Ascending aorta (tissue), 2 donors: ENCODE measurements at regions of chr5 and their contacts with region 1.

Region 1: DNA sequence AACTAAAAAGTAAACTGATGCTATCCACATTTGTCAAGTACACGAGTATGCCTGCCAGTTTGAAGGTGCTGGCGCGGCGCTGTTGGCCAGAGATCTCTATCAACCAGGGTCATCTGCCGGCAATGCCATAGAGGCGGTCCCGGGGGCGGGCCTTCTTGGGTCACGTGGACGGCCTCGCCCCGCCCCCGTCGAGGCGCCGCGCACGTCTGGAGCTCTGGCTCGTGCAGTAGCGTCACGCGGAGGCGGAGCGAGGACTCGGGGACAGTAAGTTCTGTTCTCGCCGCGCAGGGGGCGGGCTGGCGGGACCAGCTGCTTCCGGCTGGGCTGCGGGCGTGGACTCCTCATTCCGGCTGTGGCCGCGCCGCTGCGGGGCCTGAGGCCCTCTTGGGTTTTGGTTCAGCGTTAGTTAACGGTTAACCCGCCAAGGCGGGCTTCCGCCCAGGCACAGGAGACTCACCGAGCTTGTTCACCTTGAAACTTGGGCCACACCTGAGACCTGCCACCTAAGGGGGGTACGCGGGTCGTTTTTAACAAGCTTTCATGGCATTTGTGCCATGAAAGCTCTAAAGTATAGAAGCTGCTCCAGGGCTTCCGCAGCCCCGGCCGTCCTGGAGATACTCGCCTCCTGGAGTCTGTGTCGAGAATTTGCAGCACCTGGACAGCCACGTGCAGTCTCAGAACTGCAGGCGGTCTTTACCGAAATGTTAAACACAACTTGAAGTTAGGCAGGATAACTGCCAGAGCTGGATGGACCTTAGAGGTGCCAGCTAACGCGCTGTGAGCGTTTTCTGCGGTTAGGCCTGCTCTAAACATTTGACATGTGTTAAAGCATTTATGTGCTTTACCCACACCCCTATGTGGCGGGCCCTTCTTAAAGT is at the start of gene RFESD:
- DNase-seq: peak; percentile 97 to 100
- H3K4me3 ChIP-seq: peak within 1 kb of the TSS; percentile 59 to 77
- H3K27ac ChIP-seq: peak within 1 kb of the TSS; percentile 83 to 91
- H3K4me1 ChIP-seq: peaks cover 0 to 4% of the 10 kb centered on the region in 2 donors
- H3K27me3 ChIP-seq: no peaks in the 10 kb centered on the region
- CTCF ChIP-seq: peak in 1 of 3 experiments; percentile 22
- total RNA-seq, gene RFESD: not detected

Region 2: DNA sequence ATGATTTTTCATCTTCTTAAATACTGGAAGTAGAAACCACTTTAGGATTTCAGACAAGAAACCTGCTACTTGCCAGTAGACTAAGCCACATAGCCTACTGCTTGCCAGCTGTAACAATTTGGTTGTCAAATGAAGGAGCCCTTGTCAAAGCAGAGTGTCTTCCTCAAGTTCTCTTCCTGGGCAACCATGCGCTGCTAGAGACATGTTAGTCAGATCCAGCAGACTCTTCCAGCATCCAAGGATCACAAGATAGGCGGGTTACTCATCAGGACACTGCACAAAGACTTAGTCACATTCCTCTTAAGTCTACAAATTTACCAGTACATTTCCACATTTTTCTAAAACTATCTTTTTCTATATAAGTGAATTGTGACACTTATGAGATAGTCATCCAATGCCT is 116.4 kb before region 1 on chr5:
- intact Hi-C with region 1: no loop called
- DNase-seq: no peak
- H3K4me3 ChIP-seq: no peak overlapping the region
- H3K27ac ChIP-seq: no peak overlapping the region
- H3K4me1 ChIP-seq: no peaks in the 10 kb centered on the region
- H3K27me3 ChIP-seq: no peaks in the 10 kb centered on the region
- CTCF ChIP-seq: no peak

Region 3: DNA sequence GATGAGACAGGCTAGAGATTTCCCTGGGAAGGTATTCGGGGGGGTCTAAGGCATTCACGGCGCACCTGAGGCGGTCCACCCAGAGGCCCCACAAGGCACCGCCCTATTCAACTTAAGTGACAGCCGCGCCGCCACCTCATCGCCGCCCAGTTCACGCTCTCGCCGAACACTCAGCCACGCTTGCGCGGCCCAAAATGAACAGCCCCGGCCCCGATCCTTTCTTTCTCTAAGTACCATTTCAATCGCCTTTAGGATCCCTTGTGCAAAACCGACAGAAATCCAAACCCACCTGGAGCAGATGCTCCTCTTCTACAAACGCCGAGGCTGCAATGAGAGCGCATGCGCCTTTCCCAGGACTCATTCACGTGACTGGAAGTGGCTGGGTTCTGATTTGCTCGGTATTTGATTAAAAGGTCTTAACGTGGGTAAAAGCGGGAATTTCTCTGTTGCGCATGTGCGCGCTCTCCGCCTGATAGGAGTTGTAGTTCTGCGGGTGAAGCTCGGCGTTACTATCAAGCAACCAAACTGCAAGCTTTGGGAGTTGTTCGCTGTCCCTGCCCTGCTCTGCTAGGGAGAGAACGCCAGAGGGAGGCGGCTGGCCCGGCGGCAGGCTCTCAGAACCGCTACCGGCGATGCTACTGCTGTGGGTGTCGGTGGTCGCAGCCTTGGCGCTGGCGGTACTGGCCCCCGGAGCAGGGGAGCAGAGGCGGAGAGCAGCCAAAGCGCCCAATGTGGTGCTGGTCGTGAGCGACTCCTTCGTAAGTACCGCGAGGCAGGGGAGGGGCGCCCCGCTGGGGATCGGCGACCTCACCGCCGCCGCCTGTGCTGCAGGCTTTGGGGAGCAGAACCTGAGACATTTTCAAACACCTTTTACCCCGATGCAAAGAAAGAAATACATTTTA is 91.9 kb before region 1 on chr5 and contains the starts of genes ARSK and SKIC3:
- intact Hi-C with region 1: loop called (anchors 10 kb)
- DNase-seq: peak; percentile 83 to 98
- H3K4me3 ChIP-seq: peak within 1 kb of the TSS; percentile 79 to 87
- H3K27ac ChIP-seq: peak within 1 kb of the TSS; percentile 84 to 86
- H3K4me1 ChIP-seq: peaks cover 0 to 13% of the 10 kb centered on the region in 2 donors
- H3K27me3 ChIP-seq: no peaks in the 10 kb centered on the region
- CTCF ChIP-seq: peak; percentile 24 to 52 (median 31)
- total RNA-seq, gene ARSK: 3.6 TPM
- total RNA-seq, gene SKIC3: 12.7 TPM

Region 4: DNA sequence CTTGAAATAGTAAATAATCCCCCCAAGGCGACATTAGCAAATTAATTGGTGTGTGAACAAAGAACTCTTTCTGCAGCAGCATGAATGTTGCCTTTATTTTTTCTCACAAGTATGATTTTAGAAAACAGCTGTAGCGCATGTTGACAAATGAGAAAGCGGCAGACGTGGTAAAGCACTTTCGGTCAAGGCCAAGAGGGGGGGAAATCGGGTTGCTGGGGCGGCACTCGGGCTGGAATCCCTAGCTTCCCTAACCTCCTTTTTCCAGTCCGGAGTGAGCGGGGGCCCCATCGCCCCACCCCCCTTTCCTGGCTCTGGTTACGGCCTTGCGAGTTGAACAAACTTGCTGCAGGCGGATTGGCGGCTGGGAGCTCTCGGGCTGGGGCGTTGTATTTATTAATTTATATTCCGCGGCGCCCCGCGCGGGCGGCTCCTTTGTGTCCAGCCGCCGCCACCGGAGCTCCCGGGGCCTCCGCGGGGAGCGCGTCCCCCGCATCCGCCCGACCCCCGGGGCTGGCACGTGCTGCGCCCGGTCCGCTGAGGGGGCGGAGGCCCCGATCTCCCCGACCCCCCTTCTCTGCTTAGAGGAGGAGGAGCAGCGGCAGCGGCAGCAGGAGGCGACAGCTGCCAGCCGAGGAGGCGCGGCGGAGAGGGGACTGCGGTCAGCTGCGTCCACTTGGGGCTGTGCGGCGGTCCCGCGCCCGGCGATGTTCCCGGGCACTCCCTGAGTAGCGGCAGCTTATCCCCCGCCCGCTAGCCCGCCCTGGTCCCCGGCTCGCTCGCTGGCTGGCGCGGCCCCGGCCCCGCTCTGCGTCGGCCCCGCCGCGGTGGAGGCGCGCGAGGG is 84.2 kb after region 1 on chr5 and contains the start of gene RHOBTB3:
- intact Hi-C with region 1: loop called (anchors 2 kb)
- DNase-seq: peak; percentile 50 to 90
- H3K4me3 ChIP-seq: peak within 1 kb of the TSS; percentile 72 to 94
- H3K27ac ChIP-seq: peak within 1 kb of the TSS; percentile 89
- H3K4me1 ChIP-seq: peaks cover 0 to 22% of the 10 kb centered on the region in 2 donors
- H3K27me3 ChIP-seq: no peaks in the 10 kb centered on the region
- CTCF ChIP-seq: no peak
- total RNA-seq, gene RHOBTB3: 153 TPM

Region 5: DNA sequence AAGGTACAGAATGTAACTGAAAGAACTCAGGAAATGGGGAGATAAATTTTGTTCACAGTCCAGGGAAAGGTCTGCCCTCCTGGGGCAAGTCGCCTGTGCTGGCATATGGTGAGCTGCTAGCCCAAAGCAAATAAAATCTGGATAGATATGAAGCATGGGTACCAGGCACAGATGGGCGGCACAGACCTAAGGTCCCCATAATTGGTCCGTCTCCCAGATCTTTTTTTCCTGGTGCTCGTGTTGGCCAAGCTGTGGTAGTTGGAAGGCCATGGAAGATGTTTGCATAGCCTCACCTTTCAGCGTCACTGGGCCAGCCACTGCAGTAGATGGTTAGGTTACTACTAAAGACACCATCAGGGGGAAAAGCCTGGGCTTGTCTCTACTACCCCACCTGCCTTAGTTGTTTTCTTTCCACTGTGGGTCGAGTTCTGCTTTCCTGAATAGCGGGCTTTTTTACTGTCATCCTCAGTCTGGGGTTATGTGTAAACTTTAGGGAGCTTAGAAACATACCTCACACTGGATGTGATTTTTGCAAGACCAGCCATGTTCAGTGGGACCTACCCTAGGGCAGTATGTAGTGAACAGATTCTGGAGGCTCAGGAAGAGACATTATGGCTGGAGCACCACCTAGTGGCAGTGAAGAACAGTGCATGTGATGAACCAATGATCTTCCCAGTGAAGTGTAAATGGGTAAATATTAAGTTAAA is 199.9 kb after region 1 on chr5:
- intact Hi-C with region 1: loop called (anchors 5 kb)
- DNase-seq: peak in 1 of 2 donors; percentile 78
- H3K4me3 ChIP-seq: no peak overlapping the region
- H3K27ac ChIP-seq: peak overlapping the region in 1 of 2 donors; percentile 29
- H3K4me1 ChIP-seq: peaks cover 0 to 3% of the 10 kb centered on the region in 2 donors
- H3K27me3 ChIP-seq: no peaks in the 10 kb centered on the region
- CTCF ChIP-seq: peak; percentile 87 to 92 (median 91)

Region 6: GRCh38 chr5:96807075-96807654 is 1160.4 kb after region 1 on chr5:
- intact Hi-C with region 1: loop called (anchors 5 kb)
- DNase-seq: peak in 1 of 2 donors; percentile 84
- H3K4me3 ChIP-seq: peak overlapping the region; percentile 95 to 99
- H3K27ac ChIP-seq: peak overlapping the region; percentile 100
- H3K4me1 ChIP-seq: peaks cover 0 to 4% of the 10 kb centered on the region in 2 donors
- H3K27me3 ChIP-seq: no peaks in the 10 kb centered on the region
- CTCF ChIP-seq: no peak